CD4-positive, alpha-beta memory T cell (primary cell): ENCODE measurements at regions of chr17 and their contacts with region 1.

Region 1: GRCh38 chr17:8138672-8139371 is 13.4 kb downstream of the PER1 start:
- DNase-seq: peak; percentile 95 to 98 (median 96)
- H3K4me3 ChIP-seq: peak overlapping the region; percentile 60 to 74
- H3K4me3 Mint-ChIP-seq: no peak overlapping the region
- H3K27ac ChIP-seq: peak overlapping the region; percentile 78
- H3K27ac Mint-ChIP-seq: no peak overlapping the region
- H3K4me1 ChIP-seq: peaks cover 20% of the 10 kb centered on the region
- H3K4me1 Mint-ChIP-seq: peaks cover 0 to 8% (median 3%) of the 10 kb centered on the region in 4 donors
- H3K27me3 ChIP-seq: no peaks in the 10 kb centered on the region
- H3K27me3 Mint-ChIP-seq: no peaks in the 10 kb centered on the region

Region 2: DNA sequence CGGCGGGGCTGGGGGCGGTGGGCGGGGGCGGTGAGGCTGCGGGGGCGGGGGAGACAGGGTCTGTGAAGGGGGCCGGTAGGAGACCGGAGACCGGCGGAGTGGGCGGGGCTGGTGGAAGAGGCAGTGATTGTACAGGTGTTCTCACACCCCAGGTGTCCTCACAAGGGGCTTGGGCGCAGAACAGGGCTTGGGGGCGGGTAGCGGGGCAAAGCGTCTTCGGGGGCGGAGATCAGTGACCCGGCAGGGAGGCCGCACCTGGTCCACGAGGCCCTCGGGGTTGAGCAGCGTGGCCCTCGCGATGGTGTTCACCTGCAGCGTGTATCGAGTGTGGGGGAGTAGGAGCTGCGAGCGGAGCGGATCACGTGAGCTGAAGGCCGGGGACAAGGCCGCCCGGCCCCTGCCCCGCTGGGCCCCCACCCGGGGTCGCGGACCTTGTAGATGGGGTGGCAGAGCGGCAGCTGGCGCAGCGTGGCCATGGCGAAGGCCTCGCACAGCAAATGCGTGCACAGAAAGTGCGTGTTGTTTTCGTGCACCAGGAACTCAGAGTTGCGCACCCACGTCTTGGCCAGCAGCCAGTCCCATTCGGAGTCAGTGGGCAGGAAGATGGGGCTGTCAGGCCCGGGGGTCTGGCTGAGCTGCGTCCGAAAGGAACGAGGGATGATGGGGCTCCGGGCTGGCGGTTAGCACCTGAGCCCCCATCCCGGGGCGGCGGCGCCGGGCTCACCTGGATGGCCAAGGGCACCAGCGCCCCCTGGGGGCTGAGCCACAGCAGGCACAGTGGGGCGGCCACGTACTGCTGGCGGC is 29.0 kb before region 1 on chr17:
- CTCF ChIA-PET with region 1: interaction called, 11 read pairs
- POLR2A ChIA-PET with region 1: no interaction called
- intact Hi-C with region 1: no loop called
- DNase-seq: peak; percentile 78 to 86 (median 82)
- H3K4me3 ChIP-seq: peak overlapping the region; percentile 66 to 84
- H3K4me3 Mint-ChIP-seq: peak overlapping the region; percentile 42 to 78 (median 72)
- H3K27ac ChIP-seq: no peak overlapping the region
- H3K27ac Mint-ChIP-seq: no peak overlapping the region
- H3K4me1 ChIP-seq: peaks cover 5% of the 10 kb centered on the region
- H3K4me1 Mint-ChIP-seq: peaks cover 0 to 5% (median 2%) of the 10 kb centered on the region in 4 donors
- H3K27me3 ChIP-seq: peaks cover 26% of the 10 kb centered on the region
- H3K27me3 Mint-ChIP-seq: peaks cover 15 to 22% of the 10 kb centered on the region in 2 donors

Region 3: GRCh38 chr17:8151123-8151640 is 12.4 kb after region 1 on chr17:
- CTCF ChIA-PET with region 1: interaction called, 93 read pairs
- POLR2A ChIA-PET with region 1: interaction called, 237 read pairs
- intact Hi-C with region 1: loop called (anchors 1 kb)
- DNase-seq: peak; percentile 92 to 96 (median 94)
- H3K4me3 ChIP-seq: peak overlapping the region; percentile 74 to 89
- H3K4me3 Mint-ChIP-seq: peak overlapping the region in 7 of 8 donors; percentile 91 to 98 (median 93)
- H3K27ac ChIP-seq: peak overlapping the region; percentile 100
- H3K27ac Mint-ChIP-seq: no peak overlapping the region
- H3K4me1 ChIP-seq: peaks cover 54% of the 10 kb centered on the region
- H3K4me1 Mint-ChIP-seq: peaks cover 30 to 58% (median 39%) of the 10 kb centered on the region in 4 donors
- H3K27me3 ChIP-seq: no peaks in the 10 kb centered on the region
- H3K27me3 Mint-ChIP-seq: no peaks in the 10 kb centered on the region

Region 4: DNA sequence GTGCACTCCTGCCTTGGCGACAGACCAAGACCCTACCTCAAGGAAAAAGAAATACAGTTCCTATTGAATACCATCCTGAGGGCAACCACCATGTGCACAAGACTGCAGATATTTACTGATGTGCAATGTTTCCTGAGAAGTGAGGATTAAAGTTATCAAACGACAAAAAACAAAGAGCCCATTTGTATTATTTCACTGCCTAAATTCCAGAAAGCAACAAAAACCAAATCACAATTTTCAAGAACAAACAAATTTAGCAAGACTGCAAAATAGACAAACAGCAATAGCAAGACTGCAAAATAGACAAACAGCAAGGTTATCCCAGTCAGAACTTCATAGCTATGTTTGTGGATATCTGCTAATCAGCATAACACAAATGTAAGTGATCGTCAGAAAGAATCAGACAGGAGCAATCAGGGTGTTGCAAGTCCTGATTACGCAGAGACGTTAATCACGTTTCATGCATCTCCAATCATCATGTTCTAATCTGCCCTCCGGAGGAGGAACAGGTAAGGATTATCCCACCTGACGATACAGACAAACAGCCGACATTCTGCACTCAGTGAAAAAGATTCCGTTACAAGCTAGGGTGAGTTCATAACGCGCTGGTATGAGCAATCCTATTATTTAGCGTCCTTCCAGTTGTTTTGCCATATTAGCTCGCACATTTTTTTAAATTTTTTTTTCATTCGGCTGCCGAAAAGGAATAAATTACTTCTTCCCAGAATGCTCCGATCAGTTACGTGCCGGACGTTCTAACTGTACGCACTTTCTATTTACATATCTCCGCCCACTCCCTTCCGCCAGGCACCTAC is 34.4 kb after region 1 on chr17:
- CTCF ChIA-PET with region 1: interaction called, 3 read pairs
- POLR2A ChIA-PET with region 1: interaction called, 1,074 read pairs
- intact Hi-C with region 1: loop called (anchors 1 kb)
- DNase-seq: peak; percentile 91 to 94 (median 92)
- H3K4me3 ChIP-seq: peak overlapping the region; percentile 12 to 52
- H3K4me3 Mint-ChIP-seq: peak overlapping the region; percentile 84 to 94 (median 90)
- H3K27ac ChIP-seq: peak overlapping the region; percentile 99
- H3K27ac Mint-ChIP-seq: peak overlapping the region; percentile 98 to 100 (median 100)
- H3K4me1 ChIP-seq: peaks cover 45% of the 10 kb centered on the region
- H3K4me1 Mint-ChIP-seq: peaks cover 30 to 61% (median 43%) of the 10 kb centered on the region in 4 donors
- H3K27me3 ChIP-seq: no peaks in the 10 kb centered on the region
- H3K27me3 Mint-ChIP-seq: no peaks in the 10 kb centered on the region

Region 5: GRCh38 chr17:8294814-8295316 is 156.0 kb after region 1 on chr17:
- CTCF ChIA-PET with region 1: interaction called, 11 read pairs
- POLR2A ChIA-PET with region 1: interaction called, 19 read pairs
- intact Hi-C with region 1: loop called (anchors 1 kb)
- DNase-seq: no peak
- H3K4me3 ChIP-seq: peak overlapping the region; percentile 78 to 92
- H3K4me3 Mint-ChIP-seq: peak overlapping the region; percentile 91 to 97 (median 94)
- H3K27ac ChIP-seq: peak overlapping the region; percentile 73
- H3K27ac Mint-ChIP-seq: peak overlapping the region; percentile 92 to 98 (median 96)
- H3K4me1 ChIP-seq: peaks cover 26% of the 10 kb centered on the region
- H3K4me1 Mint-ChIP-seq: peaks cover 18 to 50% (median 29%) of the 10 kb centered on the region in 4 donors
- H3K27me3 ChIP-seq: no peaks in the 10 kb centered on the region
- H3K27me3 Mint-ChIP-seq: no peaks in the 10 kb centered on the region

Region 6: GRCh38 chr17:8376271-8377067 is 237.6 kb after region 1 on chr17 and contains the start of gene KRABD2:
- CTCF ChIA-PET with region 1: interaction called, 3 read pairs
- POLR2A ChIA-PET with region 1: no interaction called
- intact Hi-C with region 1: loop called (anchors 5 kb)
- DNase-seq: peak; percentile 84 to 91 (median 86)
- H3K4me3 ChIP-seq: peak within 1 kb of the TSS; percentile 86 to 97
- H3K4me3 Mint-ChIP-seq: peak within 1 kb of the TSS; percentile 88 to 91 (median 90)
- H3K27ac ChIP-seq: peak within 1 kb of the TSS; percentile 85
- H3K27ac Mint-ChIP-seq: peak within 1 kb of the TSS; percentile 87 to 93 (median 92)
- H3K4me1 ChIP-seq: peaks cover 43% of the 10 kb centered on the region
- H3K4me1 Mint-ChIP-seq: peaks cover 28 to 66% (median 47%) of the 10 kb centered on the region in 4 donors
- H3K27me3 ChIP-seq: no peaks in the 10 kb centered on the region
- H3K27me3 Mint-ChIP-seq: no peaks in the 10 kb centered on the region